ENCODE measurements at regions of chrX and their contacts with region 1.

Region 1: GRCh38 chrX:29044423-29045184 is 457.4 kb downstream of the IL1RAPL1 start:
- DNase-seq: no peak
- H3K4me3 ChIP-seq: no peak overlapping the region
- H3K27ac ChIP-seq: no peak overlapping the region
- H3K4me1 ChIP-seq: peaks cover 5% of the 10 kb centered on the region
- H3K27me3 ChIP-seq: no peaks in the 10 kb centered on the region
- CTCF ChIP-seq: peak; percentile 20

Region 2: DNA sequence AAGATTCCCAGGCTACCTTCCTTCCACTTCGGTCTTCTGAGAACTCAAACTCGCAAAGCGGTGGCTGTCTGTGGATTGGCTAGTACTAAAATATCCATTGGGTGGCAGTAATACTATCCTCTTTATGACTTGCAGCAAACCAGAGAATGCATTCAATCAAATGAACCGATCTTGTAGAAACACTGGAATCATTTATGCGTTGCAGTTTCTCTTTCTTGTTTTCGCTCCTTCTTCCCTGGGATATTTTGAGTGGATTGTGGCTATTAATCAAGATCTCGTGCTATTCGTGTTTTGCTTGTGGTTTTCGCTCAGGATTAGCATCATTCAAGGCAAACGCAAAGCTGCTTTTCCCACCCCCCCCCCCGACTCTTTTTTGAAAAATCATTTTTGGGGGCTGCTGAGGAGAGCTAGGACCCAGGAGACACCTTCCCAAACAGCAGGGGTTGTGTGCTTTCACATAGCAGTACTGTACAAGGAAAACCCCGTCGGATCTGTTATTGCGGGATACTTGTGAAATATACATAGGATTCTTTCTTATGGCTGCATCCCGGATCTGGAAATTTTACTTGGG is 457.5 kb before region 1 on chrX and contains the start of gene IL1RAPL1:
- intact Hi-C with region 1: loop called (anchors 10 kb)
- DNase-seq: no peak
- H3K4me3 ChIP-seq: peak within 1 kb of the TSS; percentile 66
- H3K27ac ChIP-seq: peak within 1 kb of the TSS; percentile 70
- H3K4me1 ChIP-seq: no peaks in the 10 kb centered on the region
- H3K27me3 ChIP-seq: no peaks in the 10 kb centered on the region
- CTCF ChIP-seq: peak; percentile 34
- total RNA-seq, gene IL1RAPL1: 1.9 TPM

Region 3: DNA sequence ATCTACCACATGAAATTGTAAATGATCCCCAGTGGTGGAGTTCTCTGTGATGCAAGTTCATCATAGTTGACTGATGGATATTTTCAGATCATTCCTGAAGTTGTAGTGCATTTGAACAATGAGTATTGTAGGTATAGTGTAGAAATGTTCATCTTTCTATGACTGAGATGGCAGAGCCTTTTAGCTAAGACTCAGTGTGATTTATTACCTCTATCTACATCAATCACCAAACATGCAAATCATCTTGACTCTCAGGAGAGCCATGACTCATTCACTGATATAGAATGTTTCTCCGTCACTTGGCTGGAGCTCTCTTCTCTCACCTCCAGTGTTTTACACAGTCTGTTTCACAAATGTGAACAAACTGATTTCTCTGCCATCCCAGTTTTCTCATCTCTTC is 64.7 kb before region 1 on chrX:
- intact Hi-C with region 1: no loop called
- DNase-seq: no peak
- H3K4me3 ChIP-seq: no peak overlapping the region
- H3K27ac ChIP-seq: no peak overlapping the region
- H3K4me1 ChIP-seq: no peaks in the 10 kb centered on the region
- H3K27me3 ChIP-seq: no peaks in the 10 kb centered on the region
- CTCF ChIP-seq: no peak

Measured in left ventricle myocardium inferior (tissue), 1 donor.